Activated CD4-positive, alpha-beta T cell treated with anti-CD3 and anti-CD28 coated beads, Interleukin-2, amount 10 ng/mL, durations not matched to agents 24 days and 14 days (primary cell): ENCODE measurements at regions of chr9 and their contacts with region 1.

Region 1: DNA sequence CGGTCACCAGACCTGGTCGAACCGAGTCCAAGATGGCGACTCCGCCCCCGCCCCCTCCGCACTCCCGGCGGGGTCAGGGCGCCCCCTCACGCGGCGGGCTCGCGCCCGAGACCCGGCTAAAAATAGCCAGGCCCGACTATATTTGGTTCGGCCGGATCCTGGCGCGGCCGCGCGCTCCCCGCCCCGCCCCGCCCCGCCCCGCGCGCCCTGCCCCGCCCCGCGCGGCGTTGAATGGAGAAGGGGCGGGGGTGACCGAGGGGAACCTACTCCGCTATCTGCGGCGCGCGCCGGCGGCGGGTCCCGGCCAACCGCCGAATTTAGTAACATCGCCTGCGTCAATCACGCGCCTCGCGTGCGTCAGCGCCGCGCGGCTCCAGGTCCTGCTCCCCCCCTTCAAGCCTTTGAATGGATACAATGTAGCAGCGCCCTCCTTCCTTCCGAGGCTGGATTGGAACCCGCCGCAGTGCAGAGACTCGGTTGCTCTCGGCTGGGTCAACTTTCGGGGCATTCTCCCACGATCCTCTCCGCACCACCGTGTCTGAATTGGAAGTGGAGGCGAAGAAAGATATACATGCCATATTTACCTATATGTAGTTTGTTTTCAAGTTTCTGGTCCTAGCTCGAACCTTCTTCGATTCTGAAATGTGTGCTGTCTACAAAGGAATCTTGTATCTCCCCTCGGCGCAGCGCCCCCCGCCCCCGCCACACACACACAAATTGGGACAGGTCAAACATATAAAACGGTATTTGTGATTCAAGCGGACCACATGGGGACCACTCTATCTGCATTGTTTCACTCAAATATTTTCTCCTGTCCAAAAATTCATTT is 1.6 kb upstream of the NR4A3 start:
- DNase-seq: peak; percentile 95
- H3K4me3 Mint-ChIP-seq: peak overlapping the region; percentile 99
- H3K27ac Mint-ChIP-seq: peak overlapping the region; percentile 96
- H3K4me1 Mint-ChIP-seq: peaks cover 49% of the 10 kb centered on the region
- H3K27me3 Mint-ChIP-seq: peaks cover 27% of the 10 kb centered on the region

Region 2: GRCh38 chr9:97982683-97983588 is 1837.1 kb before region 1 on chr9 and contains the start of gene ANP32B:
- intact Hi-C with region 1: loop called (anchors 10 kb)
- DNase-seq: peak; percentile 98
- H3K4me3 Mint-ChIP-seq: peak within 1 kb of the TSS; percentile 86
- H3K27ac Mint-ChIP-seq: peak within 1 kb of the TSS; percentile 91
- H3K4me1 Mint-ChIP-seq: peaks cover 31% of the 10 kb centered on the region
- H3K27me3 Mint-ChIP-seq: no peaks in the 10 kb centered on the region
- total RNA-seq, gene ANP32B: 332 and 333 TPM in 2 replicates

Region 3: DNA sequence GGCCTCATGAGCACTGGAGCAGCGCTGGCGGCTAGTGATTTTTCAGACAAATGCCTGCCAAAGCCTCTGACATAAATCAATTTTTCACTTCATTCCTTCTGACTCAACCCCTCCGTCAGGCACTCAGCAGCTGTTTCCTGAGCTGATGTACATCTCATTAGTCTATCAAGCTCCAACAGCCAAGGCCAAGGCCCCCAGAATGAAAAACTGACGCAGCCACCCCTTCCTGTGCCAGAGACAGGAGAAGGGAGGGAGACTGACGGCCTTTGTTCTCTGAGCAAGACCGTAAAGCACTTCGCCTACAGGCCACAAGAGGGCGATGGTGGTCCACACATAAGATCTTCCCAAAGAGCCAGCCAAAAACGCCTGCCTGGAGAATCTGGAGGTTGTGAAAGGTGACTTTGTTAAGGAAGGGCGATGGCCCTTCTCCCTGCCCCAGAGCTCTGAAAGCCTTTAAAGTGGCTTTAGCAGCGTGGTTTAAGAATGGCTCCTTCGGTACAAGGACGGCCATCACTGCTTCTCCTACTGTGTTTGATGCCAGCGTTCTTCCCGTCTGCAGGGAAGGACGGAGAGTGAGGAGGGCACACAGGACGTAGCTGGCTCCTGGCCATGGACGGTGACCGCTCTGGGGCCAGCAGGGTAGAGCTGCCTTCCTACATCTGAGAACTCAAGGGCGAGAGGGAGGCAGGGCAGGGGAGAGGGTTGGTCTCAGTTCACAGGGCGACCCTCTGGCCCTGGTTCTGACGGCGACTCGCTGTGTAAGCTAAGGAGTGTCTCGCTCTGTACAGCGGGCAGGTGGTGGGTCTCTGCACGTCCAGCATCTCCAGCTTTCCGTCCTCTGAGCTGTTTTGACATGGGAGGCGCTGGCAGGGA is 635.4 kb before region 1 on chr9:
- intact Hi-C with region 1: loop called (anchors 2 kb)
- DNase-seq: peak; percentile 92
- H3K4me3 Mint-ChIP-seq: no peak overlapping the region
- H3K27ac Mint-ChIP-seq: peak overlapping the region; percentile 56
- H3K4me1 Mint-ChIP-seq: peaks cover 43% of the 10 kb centered on the region
- H3K27me3 Mint-ChIP-seq: peaks cover 15% of the 10 kb centered on the region

Region 4: DNA sequence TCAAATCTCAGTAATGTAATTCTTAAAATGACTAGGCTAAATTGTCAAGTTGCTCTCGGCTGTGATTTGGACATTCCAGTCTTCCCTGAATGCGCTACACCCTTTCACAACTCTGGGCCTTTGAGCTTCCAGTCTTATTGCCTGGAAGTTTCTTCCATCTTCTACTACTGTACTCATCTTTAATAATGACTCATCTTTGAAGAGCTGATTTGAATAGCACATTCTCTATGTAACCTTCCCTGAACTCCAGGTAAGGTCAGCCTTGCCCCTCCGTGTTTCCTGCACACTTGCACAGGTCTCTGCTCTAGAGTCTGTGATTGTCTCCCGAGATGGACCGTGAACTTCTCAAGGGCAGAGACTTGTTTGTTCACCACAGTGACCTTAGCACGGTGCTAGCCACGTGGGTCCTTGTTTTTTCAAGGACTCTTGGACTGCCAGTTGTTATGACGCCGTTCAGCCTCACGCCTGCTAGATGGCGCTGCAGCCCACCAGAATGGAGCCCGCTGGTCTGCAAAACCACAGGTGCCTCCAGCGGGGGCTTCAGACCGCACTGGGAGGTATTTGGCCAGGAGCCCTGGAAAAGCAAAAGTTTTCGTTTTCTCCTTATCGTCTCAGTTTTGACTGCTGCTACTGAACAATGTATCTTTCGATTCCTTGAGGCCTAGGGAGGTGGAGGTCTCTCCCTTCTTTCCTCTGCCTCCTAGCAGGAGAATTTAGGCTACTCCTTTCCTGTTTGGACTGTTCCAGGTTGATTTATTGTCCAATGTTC is 553.6 kb before region 1 on chr9:
- intact Hi-C with region 1: loop called (anchors 2 kb)
- DNase-seq: peak; percentile 88
- H3K4me3 Mint-ChIP-seq: peak overlapping the region; percentile 61
- H3K27ac Mint-ChIP-seq: peak overlapping the region; percentile 55
- H3K4me1 Mint-ChIP-seq: peaks cover 26% of the 10 kb centered on the region
- H3K27me3 Mint-ChIP-seq: peaks cover 13% of the 10 kb centered on the region

Region 5: GRCh38 chr9:99906403-99907207 is 86.5 kb after region 1 on chr9 and contains the start of gene STX17:
- intact Hi-C with region 1: loop called (anchors 10 kb)
- DNase-seq: peak; percentile 94
- H3K4me3 Mint-ChIP-seq: peak within 1 kb of the TSS; percentile 98
- H3K27ac Mint-ChIP-seq: peak within 1 kb of the TSS; percentile 97
- H3K4me1 Mint-ChIP-seq: peaks cover 26% of the 10 kb centered on the region
- H3K27me3 Mint-ChIP-seq: peaks cover 16% of the 10 kb centered on the region
- total RNA-seq, gene STX17: 20.9 and 26.5 TPM in 2 replicates

Region 6: GRCh38 chr9:100098887-100099721 is 279.0 kb after region 1 on chr9 and contains the starts of genes ERP44 and INVS:
- intact Hi-C with region 1: loop called (anchors 2 kb)
- DNase-seq: peak; percentile 99
- H3K4me3 Mint-ChIP-seq: peak within 1 kb of the TSS; percentile 100
- H3K27ac Mint-ChIP-seq: peak within 1 kb of the TSS; percentile 96
- H3K4me1 Mint-ChIP-seq: peaks cover 26% of the 10 kb centered on the region
- H3K27me3 Mint-ChIP-seq: no peaks in the 10 kb centered on the region
- total RNA-seq, gene ERP44: 16.4 and 18.7 TPM in 2 replicates
- total RNA-seq, gene INVS: 14.9 and 16.9 TPM in 2 replicates